ENCODE measurements at regions of chr6 and their contacts with region 1.

Region 1: GRCh38 chr6:128822271-128822670 is 60.7 kb upstream of the LAMA2 start:
- DNase-seq: no peak
- H3K4me3 ChIP-seq: no peak overlapping the region
- H3K27ac ChIP-seq: no peak overlapping the region
- H3K27me3 ChIP-seq: no peaks in the 10 kb centered on the region
- CTCF ChIP-seq: no peak

Region 2: GRCh38 chr6:128882991-128883611 is 60.8 kb after region 1 on chr6 and contains the start of gene LAMA2:
- intact Hi-C with region 1: loop called in 1 of 2 experiments (anchors 5 kb)
- DNase-seq: peak; percentile 22 to 80 (median 66)
- H3K4me3 ChIP-seq: peak within 1 kb of the TSS; percentile 41 to 84 (median 65)
- H3K27ac ChIP-seq: peak within 1 kb of the TSS in 55 of 59 donors; percentile 1 to 87 (median 69)
- H3K27me3 ChIP-seq: no peaks in the 10 kb centered on the region
- CTCF ChIP-seq: peak in 52 of 56 donors; percentile 16 to 72 (median 48)
- total RNA-seq, gene LAMA2: 13.1 to 53.0 (median 24.1) TPM

Region 3: DNA sequence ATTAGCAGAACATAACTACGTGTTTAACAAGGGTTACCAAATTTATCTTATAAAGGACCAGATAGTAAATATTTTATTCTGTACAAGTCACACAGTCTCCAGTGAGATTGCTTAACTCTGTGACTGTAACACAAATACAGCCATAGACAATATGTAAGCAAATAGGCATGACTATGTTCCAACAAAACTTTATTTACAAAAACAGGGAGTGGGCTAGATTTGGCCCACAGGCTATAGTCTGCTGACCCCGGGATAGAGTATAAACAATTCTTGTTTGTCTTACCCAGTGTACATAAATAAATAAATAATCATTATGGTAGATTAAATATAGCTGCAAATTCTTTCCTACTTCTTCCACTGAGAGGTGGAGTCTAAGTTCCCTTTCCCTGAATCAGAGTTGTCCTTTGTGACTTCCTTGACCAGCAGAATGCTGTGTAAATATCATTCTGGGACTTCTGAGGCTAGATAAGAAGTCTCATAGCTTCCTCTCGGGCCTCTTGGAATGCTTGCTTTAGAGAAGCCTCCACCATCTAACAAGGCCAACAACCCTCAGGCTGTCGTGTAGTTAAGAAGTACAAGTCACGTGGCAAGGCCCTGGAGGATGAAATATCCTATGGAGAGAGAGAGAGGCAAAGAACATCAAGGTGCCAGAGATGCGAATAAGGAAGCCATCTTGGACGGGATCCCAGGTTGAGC is 1098.0 kb after region 1 on chr6:
- intact Hi-C with region 1: no loop called
- DNase-seq: no peak
- H3K4me3 ChIP-seq: no peak overlapping the region
- H3K27ac ChIP-seq: peak overlapping the region in 3 of 59 donors; percentile 8 to 18 (median 16)
- H3K27me3 ChIP-seq: no peaks in the 10 kb centered on the region
- CTCF ChIP-seq: no peak